Naive thymus-derived CD4-positive, alpha-beta T cell (primary cell): ENCODE measurements at regions of chr3 and their contacts with region 1.

Region 1: DNA sequence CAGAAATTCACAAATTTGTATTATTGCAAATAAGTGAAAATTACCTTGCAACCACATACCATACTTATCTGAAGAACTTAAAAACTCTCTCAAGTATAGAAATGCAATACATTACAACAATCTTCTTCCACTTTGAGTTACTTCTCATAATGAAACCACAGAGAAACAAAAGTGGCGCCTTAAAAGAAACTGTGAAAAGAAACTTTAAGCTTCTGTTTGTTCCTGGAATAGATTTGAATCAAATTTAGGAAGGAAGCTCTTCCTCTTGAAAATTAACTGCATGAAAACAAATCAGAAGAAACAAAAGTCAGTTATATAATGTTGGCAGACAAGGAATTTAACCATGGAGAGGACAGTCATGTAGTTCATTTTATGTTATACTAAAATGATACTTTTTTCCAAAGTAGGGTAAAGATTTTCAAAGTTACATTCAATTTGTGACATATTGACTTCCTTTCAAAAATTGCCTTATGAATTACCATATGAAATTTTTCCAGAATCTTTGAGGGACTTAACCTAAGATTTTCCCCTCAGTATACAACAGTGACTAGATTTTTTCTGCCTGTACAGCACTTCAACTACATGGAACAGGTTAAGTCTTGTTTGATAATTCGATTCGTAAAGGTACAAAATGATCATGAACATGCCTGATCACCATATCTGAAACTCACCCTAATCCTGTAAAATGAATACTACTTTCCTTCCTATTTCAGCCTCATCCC is 57.6 kb upstream of the TNFSF10 start:
- DNase-seq: peak in 2 of 9 donors; percentile 29 to 33
- ATAC-seq: no peak
- H3K4me3 ChIP-seq: peak overlapping the region; percentile 19
- H3K4me3 Mint-ChIP-seq: peak overlapping the region; percentile 49 to 85 (median 74)
- H3K27ac ChIP-seq: peak overlapping the region; percentile 57
- H3K27ac Mint-ChIP-seq: peak overlapping the region; percentile 83 to 97 (median 93)
- H3K4me1 ChIP-seq: peaks cover 29 to 41% of the 10 kb centered on the region in 2 donors
- H3K4me1 Mint-ChIP-seq: peaks cover 65 to 96% (median 94%) of the 10 kb centered on the region in 7 donors
- H3K27me3 ChIP-seq: no peaks in the 10 kb centered on the region
- H3K27me3 Mint-ChIP-seq: no peaks in the 10 kb centered on the region

Region 2: GRCh38 chr3:172511783-172512762 is 68.8 kb before region 1 on chr3:
- CTCF ChIA-PET with region 1: no interaction called
- POLR2A ChIA-PET with region 1: interaction called, 4 read pairs
- intact Hi-C with region 1: loop called in 1 of 2 experiments (anchors 1 kb)
- DNase-seq: peak in 7 of 9 donors; percentile 28 to 76 (median 48)
- ATAC-seq: peak; percentile 87
- H3K4me3 ChIP-seq: peak overlapping the region; percentile 2
- H3K4me3 Mint-ChIP-seq: peak overlapping the region; percentile 62 to 93 (median 80)
- H3K27ac ChIP-seq: peak overlapping the region; percentile 61
- H3K27ac Mint-ChIP-seq: peak overlapping the region; percentile 88 to 100 (median 93)
- H3K4me1 ChIP-seq: peaks cover 52 to 56% of the 10 kb centered on the region in 2 donors
- H3K4me1 Mint-ChIP-seq: peaks cover 65 to 91% (median 84%) of the 10 kb centered on the region in 7 donors
- H3K27me3 ChIP-seq: no peaks in the 10 kb centered on the region
- H3K27me3 Mint-ChIP-seq: no peaks in the 10 kb centered on the region

Region 3: DNA sequence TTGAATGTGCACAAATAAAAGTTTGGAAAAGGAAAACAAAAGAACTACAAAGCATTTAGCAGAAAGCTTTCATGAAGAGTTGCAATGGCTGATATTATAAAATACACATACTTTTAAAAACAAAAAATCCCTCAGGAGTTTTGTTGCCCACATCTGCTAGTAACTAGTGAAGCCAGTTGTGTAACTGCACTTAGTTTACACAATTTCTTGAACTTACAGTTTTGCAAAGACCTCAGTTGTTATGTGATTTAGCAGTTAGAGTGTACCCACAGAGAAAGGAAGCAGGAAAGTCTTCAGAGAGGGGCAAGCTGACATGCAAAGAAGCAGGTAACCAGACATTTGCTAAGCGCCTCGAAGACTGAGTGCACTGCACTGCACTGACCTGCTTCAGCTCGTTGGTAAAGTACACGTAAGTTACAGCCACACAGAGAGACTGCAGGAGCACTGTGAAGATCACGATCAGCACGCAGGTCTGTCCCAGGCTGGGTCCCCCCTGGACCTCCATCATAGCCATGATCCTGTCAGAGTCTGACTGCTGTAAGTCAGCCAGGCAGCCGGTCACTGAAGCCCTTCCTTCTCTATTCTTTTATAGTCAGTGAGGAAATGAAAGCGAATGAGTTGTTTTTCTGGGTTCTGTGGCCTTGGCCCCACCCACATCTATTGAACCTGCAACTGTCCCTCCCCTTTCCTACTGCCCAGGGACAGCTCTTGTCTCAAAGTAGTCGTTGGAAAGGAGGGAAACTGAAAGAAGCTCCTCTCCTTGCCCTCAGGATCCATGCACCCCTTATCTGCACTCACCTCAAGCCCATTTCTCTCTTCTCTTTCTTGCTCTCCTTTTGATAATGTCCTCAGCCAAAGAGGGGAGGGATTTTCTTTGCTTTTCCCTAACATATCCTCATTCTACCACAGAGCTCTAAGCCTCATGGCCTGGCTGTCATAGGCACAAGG is 57.7 kb before region 1 on chr3 and contains the start of gene TNFSF10:
- CTCF ChIA-PET with region 1: interaction called, 6 read pairs
- POLR2A ChIA-PET with region 1: interaction called, 13 read pairs
- intact Hi-C with region 1: loop called in 1 of 2 experiments (anchors 1 kb)
- DNase-seq: peak; percentile 19 to 71 (median 60)
- ATAC-seq: peak; percentile 87
- H3K4me3 ChIP-seq: peak within 1 kb of the TSS; percentile 86
- H3K4me3 Mint-ChIP-seq: peak within 1 kb of the TSS; percentile 89 to 100 (median 96)
- H3K27ac ChIP-seq: peak within 1 kb of the TSS; percentile 85
- H3K27ac Mint-ChIP-seq: peak within 1 kb of the TSS; percentile 88 to 100 (median 99)
- H3K4me1 ChIP-seq: peaks cover 26 to 34% of the 10 kb centered on the region in 2 donors
- H3K4me1 Mint-ChIP-seq: peaks cover 36 to 63% (median 53%) of the 10 kb centered on the region in 7 donors
- H3K27me3 ChIP-seq: no peaks in the 10 kb centered on the region
- H3K27me3 Mint-ChIP-seq: no peaks in the 10 kb centered on the region
- total RNA-seq, gene TNFSF10: 10.8 to 234 (median 45.0) TPM

Region 4: DNA sequence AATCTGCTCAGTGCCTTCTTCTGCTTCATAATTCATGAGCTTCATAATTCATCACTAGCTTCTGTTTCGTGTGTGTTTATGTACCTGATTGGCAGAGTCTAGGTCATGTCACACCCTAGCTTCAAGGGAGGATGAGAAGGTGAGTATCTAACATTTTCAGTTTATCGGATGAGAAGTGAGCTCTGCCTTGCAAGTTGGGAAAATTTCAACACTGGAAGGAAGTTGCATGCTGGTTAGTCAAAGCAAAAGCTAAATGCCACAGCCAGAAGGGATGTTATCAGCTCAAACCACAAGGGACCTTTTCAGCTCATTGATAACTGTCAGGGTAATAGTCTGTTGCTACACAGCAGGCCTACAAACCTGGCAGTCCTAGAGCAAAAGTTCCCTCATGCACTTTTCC is 50.3 kb before region 1 on chr3:
- CTCF ChIA-PET with region 1: no interaction called
- POLR2A ChIA-PET with region 1: no interaction called
- intact Hi-C with region 1: loop called in 1 of 2 experiments (anchors 1 kb)
- DNase-seq: peak in 4 of 9 donors; percentile 31 to 43 (median 38)
- ATAC-seq: peak; percentile 83
- H3K4me3 ChIP-seq: peak overlapping the region; percentile 2
- H3K4me3 Mint-ChIP-seq: peak overlapping the region in 9 of 10 donors; percentile 14 to 84 (median 69)
- H3K27ac ChIP-seq: peak overlapping the region; percentile 9
- H3K27ac Mint-ChIP-seq: peak overlapping the region; percentile 40 to 93 (median 80)
- H3K4me1 ChIP-seq: peaks cover 14 to 18% of the 10 kb centered on the region in 2 donors
- H3K4me1 Mint-ChIP-seq: peaks cover 15 to 69% (median 30%) of the 10 kb centered on the region in 7 donors
- H3K27me3 ChIP-seq: no peaks in the 10 kb centered on the region
- H3K27me3 Mint-ChIP-seq: no peaks in the 10 kb centered on the region

Region 5: DNA sequence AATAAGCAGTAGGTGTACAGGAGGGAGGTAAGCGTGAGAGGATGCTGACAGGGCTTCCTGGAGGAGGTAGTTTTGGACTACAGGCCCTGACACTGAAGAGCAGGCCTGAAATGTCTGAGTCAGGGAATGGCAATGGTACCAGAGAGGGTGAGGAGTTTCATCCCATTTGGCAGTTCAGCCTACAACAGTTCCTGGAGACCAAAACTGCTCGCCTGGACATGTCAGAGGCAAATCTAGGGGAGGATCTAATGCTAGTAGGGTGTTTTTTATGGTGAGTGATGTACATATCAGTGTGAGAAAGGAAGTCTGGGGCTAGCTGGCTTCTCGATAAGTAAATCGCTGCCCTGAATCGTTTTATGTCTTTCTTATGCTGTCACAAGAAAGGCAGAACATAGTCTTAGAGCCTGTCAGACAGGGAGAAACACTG is 43.8 kb before region 1 on chr3:
- CTCF ChIA-PET with region 1: no interaction called
- POLR2A ChIA-PET with region 1: no interaction called
- intact Hi-C with region 1: loop called in 1 of 2 experiments (anchors 2 kb)
- DNase-seq: peak in 2 of 9 donors; percentile 32 to 40
- ATAC-seq: peak; percentile 80
- H3K4me3 ChIP-seq: no peak overlapping the region
- H3K4me3 Mint-ChIP-seq: peak overlapping the region; percentile 50 to 77 (median 62)
- H3K27ac ChIP-seq: peak overlapping the region; percentile 41
- H3K27ac Mint-ChIP-seq: peak overlapping the region; percentile 69 to 90 (median 82)
- H3K4me1 ChIP-seq: peaks cover 15 to 33% of the 10 kb centered on the region in 2 donors
- H3K4me1 Mint-ChIP-seq: peaks cover 16 to 66% (median 46%) of the 10 kb centered on the region in 7 donors
- H3K27me3 ChIP-seq: no peaks in the 10 kb centered on the region
- H3K27me3 Mint-ChIP-seq: no peaks in the 10 kb centered on the region

Region 6: GRCh38 chr3:172562871-172563863 is 17.7 kb before region 1 on chr3:
- CTCF ChIA-PET with region 1: no interaction called
- POLR2A ChIA-PET with region 1: interaction called, 4 read pairs
- intact Hi-C with region 1: loop called in 1 of 2 experiments (anchors 1 kb)
- DNase-seq: peak in 3 of 9 donors; percentile 19 to 38 (median 22)
- ATAC-seq: peak; percentile 26
- H3K4me3 ChIP-seq: peak overlapping the region; percentile 26
- H3K4me3 Mint-ChIP-seq: peak overlapping the region in 9 of 10 donors; percentile 36 to 82 (median 66)
- H3K27ac ChIP-seq: no peak overlapping the region
- H3K27ac Mint-ChIP-seq: peak overlapping the region; percentile 22 to 92 (median 77)
- H3K4me1 ChIP-seq: peaks cover 0 to 15% of the 10 kb centered on the region in 2 donors
- H3K4me1 Mint-ChIP-seq: peaks cover 15 to 54% (median 26%) of the 10 kb centered on the region in 7 donors
- H3K27me3 ChIP-seq: no peaks in the 10 kb centered on the region
- H3K27me3 Mint-ChIP-seq: no peaks in the 10 kb centered on the region

Region 7: GRCh38 chr3:172606021-172606420 is 25.2 kb after region 1 on chr3:
- CTCF ChIA-PET with region 1: no interaction called
- POLR2A ChIA-PET with region 1: no interaction called
- intact Hi-C with region 1: no loop called
- DNase-seq: no peak
- ATAC-seq: no peak
- H3K4me3 ChIP-seq: no peak overlapping the region
- H3K4me3 Mint-ChIP-seq: no peak overlapping the region
- H3K27ac ChIP-seq: no peak overlapping the region
- H3K27ac Mint-ChIP-seq: no peak overlapping the region
- H3K4me1 ChIP-seq: no peaks in the 10 kb centered on the region
- H3K4me1 Mint-ChIP-seq: peaks cover 0 to 13% (median 0%) of the 10 kb centered on the region in 7 donors
- H3K27me3 ChIP-seq: no peaks in the 10 kb centered on the region
- H3K27me3 Mint-ChIP-seq: peaks cover 0 to 5% (median 0%) of the 10 kb centered on the region in 5 donors